ENCODE measurements at regions of chr17 and their contacts with region 1.

Region 1: GRCh38 chr17:19513897-19514488 is 19.7 kb upstream of the SLC47A1 start:
- DNase-seq: peak in 1 of 2 experiments; percentile 84
- H3K4me3 ChIP-seq: no peak overlapping the region
- H3K27ac ChIP-seq: no peak overlapping the region
- H3K4me1 ChIP-seq: peaks cover 0 to 3% (median 0%) of the 10 kb centered on the region in 4 experiments; a peak in 1 of 7 replicates
- H3K27me3 ChIP-seq: no peaks in the 10 kb centered on the region
- CTCF ChIP-seq: peak; percentile 83 to 95 (median 95)
- EP300 ChIP-seq: no peak
- POLR2A ChIP-seq: no peak
- RAD21 ChIP-seq: peak; percentile 95 to 97

Region 2: GRCh38 chr17:19433727-19434340 is 80.2 kb before region 1 on chr17:
- CTCF ChIA-PET with region 1: interaction called, 10 read pairs
- POLR2A ChIA-PET with region 1: no interaction called
- DNase-seq: no peak
- H3K4me3 ChIP-seq: peak overlapping the region in 1 of 4 experiments; percentile 31; a peak in 2 of 8 replicates
- H3K27ac ChIP-seq: no peak overlapping the region
- H3K4me1 ChIP-seq: peaks cover 5 to 16% (median 11%) of the 10 kb centered on the region in 4 experiments
- H3K27me3 ChIP-seq: no peaks in the 10 kb centered on the region
- CTCF ChIP-seq: peak; percentile 56 to 66 (median 58)
- EP300 ChIP-seq: no peak
- POLR2A ChIP-seq: no peak
- RAD21 ChIP-seq: peak; percentile 79 to 83

Measured in H1 (cell line).